GM12878 (cell line): ENCODE measurements at regions of chr3 and their contacts with region 1.

Region 1: DNA sequence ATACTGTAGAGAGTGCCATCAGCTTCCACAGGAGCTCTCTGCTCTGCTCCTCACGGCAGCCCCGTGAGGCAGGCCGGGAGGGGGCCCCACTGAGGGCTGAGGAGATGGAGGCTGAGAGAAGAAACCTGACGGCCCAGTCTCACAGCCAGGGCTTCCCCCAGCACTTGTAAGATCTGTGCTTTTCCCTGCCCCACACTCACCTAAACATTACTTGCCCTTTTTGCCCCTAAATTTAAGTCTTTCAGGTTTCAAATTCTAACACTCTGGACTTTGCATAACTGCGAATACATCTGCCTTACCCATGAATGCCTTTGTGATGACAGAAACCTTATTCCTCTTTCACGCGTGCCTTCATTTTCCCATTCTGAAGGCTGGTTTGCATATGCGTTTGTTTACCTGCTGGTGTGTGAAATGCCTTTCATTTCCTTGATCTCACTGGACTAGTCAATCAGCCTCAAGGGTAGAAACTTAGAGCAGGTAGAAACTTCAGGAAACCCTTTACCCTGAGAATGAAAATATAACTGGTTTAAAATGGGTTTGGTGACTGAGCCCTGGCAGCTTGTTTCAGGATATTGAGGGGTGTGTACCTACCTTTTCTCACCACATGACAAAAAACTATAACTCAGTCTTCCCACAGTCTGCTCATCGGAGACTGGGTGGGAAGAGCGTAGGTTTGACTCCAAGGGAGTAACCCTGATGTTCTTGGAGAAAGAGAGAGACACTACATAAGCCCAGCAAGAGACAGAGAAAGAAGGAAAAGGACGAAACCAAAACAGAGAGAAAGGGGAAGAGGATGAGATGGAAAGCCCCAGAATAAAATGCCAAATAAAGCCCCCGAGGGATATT is 20.1 kb downstream of the SLC12A8 start:
- DNase-seq: peak; percentile 78
- ATAC-seq: peak; percentile 89
- H3K4me3 ChIP-seq: peak overlapping the region; percentile 38; the same call in 1 of the 2 replicates
- H3K27ac ChIP-seq: peak overlapping the region; percentile 75
- H3K4me1 ChIP-seq: peaks cover 44% of the 10 kb centered on the region
- H3K27me3 ChIP-seq: no peaks in the 10 kb centered on the region
- CTCF ChIP-seq: peak; percentile 46 to 64 (median 56)
- EP300 ChIP-seq: no peak
- POLR2A ChIP-seq: peak; percentile 39; the same call in 1 of the 2 replicates
- RAD21 ChIP-seq: peak; percentile 53

Region 2: GRCh38 chr3:124873226-124873625 is 319.2 kb before region 1 on chr3:
- CTCF ChIA-PET with region 1: no interaction called
- POLR2A ChIA-PET with region 1: no interaction called
- RAD21 ChIA-PET with region 1: no interaction called
- SMC1A ChIA-PET with region 1: no interaction called
- in situ Hi-C with region 1: no loop called
- intact Hi-C with region 1: no loop called
- DNase-seq: no peak
- ATAC-seq: no peak
- H3K4me3 ChIP-seq: no peak overlapping the region
- H3K27ac ChIP-seq: no peak overlapping the region
- H3K4me1 ChIP-seq: no peaks in the 10 kb centered on the region
- H3K27me3 ChIP-seq: no peaks in the 10 kb centered on the region
- CTCF ChIP-seq: no peak
- EP300 ChIP-seq: no peak
- POLR2A ChIP-seq: no peak
- RAD21 ChIP-seq: no peak

Region 3: GRCh38 chr3:125150525-125151441 is 41.6 kb before region 1 on chr3:
- CTCF ChIA-PET with region 1: interaction called, 4 read pairs
- POLR2A ChIA-PET with region 1: no interaction called
- RAD21 ChIA-PET with region 1: interaction called, 3 read pairs
- SMC1A ChIA-PET with region 1: no interaction called
- in situ Hi-C with region 1: no loop called
- intact Hi-C with region 1: loop called (anchors 2 kb)
- DNase-seq: no peak
- ATAC-seq: peak; percentile 57
- H3K4me3 ChIP-seq: no peak overlapping the region
- H3K27ac ChIP-seq: no peak overlapping the region
- H3K4me1 ChIP-seq: peaks cover 55% of the 10 kb centered on the region
- H3K27me3 ChIP-seq: no peaks in the 10 kb centered on the region
- CTCF ChIP-seq: peak; percentile 49 to 80 (median 70)
- EP300 ChIP-seq: no peak
- POLR2A ChIP-seq: no peak
- RAD21 ChIP-seq: peak; percentile 70

Region 4: GRCh38 chr3:125179143-125179883 is 13.1 kb before region 1 on chr3:
- CTCF ChIA-PET with region 1: interaction called, 4 read pairs
- POLR2A ChIA-PET with region 1: interaction called, 7 read pairs
- RAD21 ChIA-PET with region 1: interaction called, 11 read pairs
- SMC1A ChIA-PET with region 1: interaction called, 8 read pairs
- in situ Hi-C with region 1: no loop called
- intact Hi-C with region 1: no loop called
- DNase-seq: no peak
- ATAC-seq: peak; percentile 98
- H3K4me3 ChIP-seq: no peak overlapping the region
- H3K27ac ChIP-seq: peak overlapping the region; percentile 61
- H3K4me1 ChIP-seq: peaks cover 8% of the 10 kb centered on the region
- H3K27me3 ChIP-seq: no peaks in the 10 kb centered on the region
- CTCF ChIP-seq: no peak
- EP300 ChIP-seq: no peak; a peak in 1 of 4 replicates
- POLR2A ChIP-seq: no peak
- RAD21 ChIP-seq: no peak

Region 5: GRCh38 chr3:125381743-125382142 is 189.3 kb after region 1 on chr3:
- CTCF ChIA-PET with region 1: no interaction called
- POLR2A ChIA-PET with region 1: no interaction called
- RAD21 ChIA-PET with region 1: no interaction called
- SMC1A ChIA-PET with region 1: no interaction called
- in situ Hi-C with region 1: no loop called
- intact Hi-C with region 1: no loop called
- DNase-seq: peak; percentile 43
- ATAC-seq: peak; percentile 93
- H3K4me3 ChIP-seq: no peak overlapping the region
- H3K27ac ChIP-seq: no peak overlapping the region
- H3K4me1 ChIP-seq: no peaks in the 10 kb centered on the region
- H3K27me3 ChIP-seq: no peaks in the 10 kb centered on the region
- CTCF ChIP-seq: no peak
- EP300 ChIP-seq: no peak
- POLR2A ChIP-seq: no peak
- RAD21 ChIP-seq: no peak